Activated naive CD4-positive, alpha-beta T cell treated with anti-CD3 and anti-CD28 coated beads for 36 hours (primary cell): ENCODE measurements at regions of chr20 and their contacts with region 1.

Region 1: GRCh38 chr20:45322952-45323383 is 14.9 kb upstream of the MATN4 start:
- DNase-seq: peak; percentile 54
- H3K4me3 Mint-ChIP-seq: no peak overlapping the region
- H3K27ac Mint-ChIP-seq: no peak overlapping the region
- H3K4me1 Mint-ChIP-seq: peaks cover 26% of the 10 kb centered on the region
- H3K27me3 Mint-ChIP-seq: no peaks in the 10 kb centered on the region

Region 2: GRCh38 chr20:45293041-45294002 is 29.6 kb before region 1 on chr20:
- CTCF ChIA-PET with region 1: interaction called, 50 read pairs
- intact Hi-C with region 1: no loop called
- DNase-seq: peak; percentile 90
- H3K4me3 Mint-ChIP-seq: peak overlapping the region; percentile 72
- H3K27ac Mint-ChIP-seq: no peak overlapping the region
- H3K4me1 Mint-ChIP-seq: peaks cover 4% of the 10 kb centered on the region
- H3K27me3 Mint-ChIP-seq: peaks cover 33% of the 10 kb centered on the region

Region 3: DNA sequence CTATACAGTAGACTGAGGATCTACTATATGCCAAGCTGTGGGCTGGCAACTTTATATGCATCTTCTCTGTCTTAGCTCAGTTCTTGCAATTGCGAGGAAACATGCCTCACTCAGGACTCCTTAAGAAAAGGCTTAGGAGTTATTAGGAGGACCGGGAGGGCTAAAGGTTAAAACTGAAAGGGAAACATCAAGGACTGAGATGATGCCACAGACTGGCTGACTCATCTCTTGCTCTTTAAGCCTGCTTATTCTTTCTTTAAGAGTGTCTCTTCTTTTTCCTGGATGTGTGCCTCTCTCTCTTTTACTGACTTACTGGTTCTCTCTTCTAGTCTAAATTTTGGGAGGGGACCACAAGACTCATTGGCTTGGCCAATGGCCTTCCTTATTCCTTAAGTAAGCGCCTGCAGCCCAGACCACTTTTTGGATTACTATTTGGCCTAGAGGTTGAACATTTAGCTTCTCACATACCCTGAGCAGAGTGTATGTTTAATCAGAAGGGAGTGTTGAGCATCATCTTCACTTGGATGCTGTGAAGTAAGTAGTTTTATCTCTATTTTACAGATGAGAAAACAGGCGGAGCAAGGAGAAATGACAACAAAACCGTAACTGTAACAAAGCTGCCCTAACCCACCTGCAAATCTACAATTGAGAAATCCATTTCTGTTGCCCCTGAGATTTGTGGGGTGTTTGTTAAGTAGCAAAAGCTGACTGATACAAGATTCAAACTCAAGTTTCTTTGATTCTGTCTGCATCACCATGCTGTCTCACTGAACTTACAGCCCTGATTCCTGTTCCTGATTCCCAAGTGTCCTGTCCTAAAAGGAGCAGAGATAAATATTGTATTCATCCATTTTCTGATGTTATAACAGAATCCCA is 32.5 kb after region 1 on chr20:
- CTCF ChIA-PET with region 1: interaction called, 35 read pairs
- intact Hi-C with region 1: loop called (anchors 2 kb)
- DNase-seq: peak; percentile 56
- H3K4me3 Mint-ChIP-seq: peak overlapping the region; percentile 28
- H3K27ac Mint-ChIP-seq: peak overlapping the region; percentile 91
- H3K4me1 Mint-ChIP-seq: peaks cover 45% of the 10 kb centered on the region
- H3K27me3 Mint-ChIP-seq: no peaks in the 10 kb centered on the region

Region 4: DNA sequence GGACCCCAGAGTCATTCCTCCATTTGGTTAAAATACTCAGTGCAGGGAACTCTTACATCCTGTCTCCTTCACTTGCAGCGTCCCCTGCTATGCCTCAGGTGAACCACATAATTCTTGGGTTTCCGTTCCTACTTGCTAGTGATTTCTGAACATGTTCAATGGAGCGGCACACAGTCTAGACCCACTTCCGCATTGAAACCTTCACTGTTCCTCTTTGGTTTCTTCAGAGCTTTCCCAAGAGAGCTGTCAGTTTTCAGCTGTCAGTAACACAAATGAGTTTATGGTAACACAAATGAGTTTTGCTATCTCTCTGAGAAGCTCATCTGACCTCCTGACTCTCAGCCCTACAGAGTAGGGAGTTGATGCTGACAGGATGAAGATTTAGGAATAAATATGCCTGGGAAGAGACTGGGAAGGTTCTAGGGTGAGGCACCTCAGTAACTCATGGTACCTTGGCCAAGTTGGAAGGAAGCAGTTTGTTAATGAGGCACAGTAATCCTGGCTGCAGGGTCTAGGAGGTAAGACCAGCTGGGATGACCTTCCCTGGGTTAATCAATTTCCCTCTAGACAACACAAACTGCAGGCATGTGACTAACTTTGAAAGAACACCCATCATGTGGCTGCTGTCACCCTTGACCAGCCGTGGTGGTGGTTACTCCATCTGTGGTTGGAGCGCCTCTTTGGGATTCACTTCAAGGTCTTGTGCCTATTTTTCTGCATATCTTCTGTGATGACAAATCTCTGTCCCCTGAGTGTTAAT is 45.4 kb after region 1 on chr20:
- CTCF ChIA-PET with region 1: interaction called, 35 read pairs
- intact Hi-C with region 1: loop called (anchors 2 kb)
- DNase-seq: peak; percentile 66
- H3K4me3 Mint-ChIP-seq: peak overlapping the region; percentile 7
- H3K27ac Mint-ChIP-seq: peak overlapping the region; percentile 73
- H3K4me1 Mint-ChIP-seq: peaks cover 56% of the 10 kb centered on the region
- H3K27me3 Mint-ChIP-seq: no peaks in the 10 kb centered on the region

Region 5: DNA sequence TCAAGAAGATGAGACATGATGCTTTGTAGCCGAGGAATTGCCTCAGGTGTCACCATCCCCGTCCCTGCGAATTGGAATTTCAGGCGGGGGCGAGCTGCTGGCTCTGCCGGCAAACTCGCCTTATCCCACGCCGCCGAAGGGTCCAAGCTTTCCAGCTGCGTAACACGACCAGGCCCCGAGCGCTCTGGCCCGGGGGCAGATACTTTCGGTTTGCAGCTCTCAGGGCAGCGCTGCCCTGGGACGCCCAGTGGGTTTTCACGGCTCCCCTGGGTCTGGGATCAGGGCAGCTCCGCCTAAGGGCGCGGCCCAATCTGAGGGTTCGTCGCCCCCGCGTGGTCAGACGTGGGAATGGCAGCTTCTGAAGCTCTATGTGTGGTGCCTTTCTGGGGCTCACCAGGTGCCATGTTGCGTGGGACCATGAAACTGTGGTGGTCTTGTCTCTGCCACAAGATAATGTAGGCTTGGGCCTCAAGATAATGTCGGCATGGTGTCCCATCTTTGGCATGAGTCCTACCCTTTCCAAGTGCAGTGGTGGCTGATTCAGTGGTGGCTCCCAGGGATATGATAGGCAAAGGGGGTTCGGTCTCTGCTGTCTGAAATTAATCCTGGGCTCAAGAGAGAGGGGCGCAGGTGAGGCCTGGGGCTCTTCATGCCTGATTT is 113.9 kb after region 1 on chr20:
- CTCF ChIA-PET with region 1: interaction called, 116 read pairs
- intact Hi-C with region 1: loop called (anchors 1 kb)
- DNase-seq: peak; percentile 91
- H3K4me3 Mint-ChIP-seq: peak overlapping the region; percentile 64
- H3K27ac Mint-ChIP-seq: no peak overlapping the region
- H3K4me1 Mint-ChIP-seq: peaks cover 10% of the 10 kb centered on the region
- H3K27me3 Mint-ChIP-seq: no peaks in the 10 kb centered on the region

Region 6: GRCh38 chr20:45771182-45771759 is 448.3 kb after region 1 on chr20:
- CTCF ChIA-PET with region 1: interaction called, 5 read pairs
- intact Hi-C with region 1: loop called (anchors 5 kb)
- DNase-seq: peak; percentile 88
- H3K4me3 Mint-ChIP-seq: no peak overlapping the region
- H3K27ac Mint-ChIP-seq: no peak overlapping the region
- H3K4me1 Mint-ChIP-seq: peaks cover 3% of the 10 kb centered on the region
- H3K27me3 Mint-ChIP-seq: peaks cover 3% of the 10 kb centered on the region